ENCODE measurements at regions of chr5 and their contacts with region 1.

Region 1: GRCh38 chr5:137778772-137779564 is 24.8 kb upstream of the HNRNPA0 start:
- DNase-seq: no peak
- H3K4me3 Mint-ChIP-seq: no peak overlapping the region
- H3K27ac Mint-ChIP-seq: no peak overlapping the region
- H3K4me1 Mint-ChIP-seq: no peaks in the 10 kb centered on the region
- H3K27me3 Mint-ChIP-seq: no peaks in the 10 kb centered on the region

Region 2: GRCh38 chr5:137563646-137564397 is 215.1 kb before region 1 on chr5:
- CTCF ChIA-PET with region 1: no interaction called
- intact Hi-C with region 1: no loop called
- DNase-seq: no peak
- H3K4me3 Mint-ChIP-seq: no peak overlapping the region
- H3K27ac Mint-ChIP-seq: no peak overlapping the region
- H3K4me1 Mint-ChIP-seq: no peaks in the 10 kb centered on the region
- H3K27me3 Mint-ChIP-seq: peaks cover 11% of the 10 kb centered on the region

Region 3: GRCh38 chr5:137800700-137801411 is 21.9 kb after region 1 on chr5:
- CTCF ChIA-PET with region 1: interaction called, 17 read pairs
- intact Hi-C with region 1: no loop called
- DNase-seq: no peak
- H3K4me3 Mint-ChIP-seq: no peak overlapping the region
- H3K27ac Mint-ChIP-seq: no peak overlapping the region
- H3K4me1 Mint-ChIP-seq: no peaks in the 10 kb centered on the region
- H3K27me3 Mint-ChIP-seq: no peaks in the 10 kb centered on the region

Region 4: GRCh38 chr5:137808503-137809205 is 29.7 kb after region 1 on chr5:
- CTCF ChIA-PET with region 1: interaction called, 11 read pairs
- intact Hi-C with region 1: no loop called
- DNase-seq: no peak
- H3K4me3 Mint-ChIP-seq: no peak overlapping the region
- H3K27ac Mint-ChIP-seq: no peak overlapping the region
- H3K4me1 Mint-ChIP-seq: no peaks in the 10 kb centered on the region
- H3K27me3 Mint-ChIP-seq: no peaks in the 10 kb centered on the region

Region 5: DNA sequence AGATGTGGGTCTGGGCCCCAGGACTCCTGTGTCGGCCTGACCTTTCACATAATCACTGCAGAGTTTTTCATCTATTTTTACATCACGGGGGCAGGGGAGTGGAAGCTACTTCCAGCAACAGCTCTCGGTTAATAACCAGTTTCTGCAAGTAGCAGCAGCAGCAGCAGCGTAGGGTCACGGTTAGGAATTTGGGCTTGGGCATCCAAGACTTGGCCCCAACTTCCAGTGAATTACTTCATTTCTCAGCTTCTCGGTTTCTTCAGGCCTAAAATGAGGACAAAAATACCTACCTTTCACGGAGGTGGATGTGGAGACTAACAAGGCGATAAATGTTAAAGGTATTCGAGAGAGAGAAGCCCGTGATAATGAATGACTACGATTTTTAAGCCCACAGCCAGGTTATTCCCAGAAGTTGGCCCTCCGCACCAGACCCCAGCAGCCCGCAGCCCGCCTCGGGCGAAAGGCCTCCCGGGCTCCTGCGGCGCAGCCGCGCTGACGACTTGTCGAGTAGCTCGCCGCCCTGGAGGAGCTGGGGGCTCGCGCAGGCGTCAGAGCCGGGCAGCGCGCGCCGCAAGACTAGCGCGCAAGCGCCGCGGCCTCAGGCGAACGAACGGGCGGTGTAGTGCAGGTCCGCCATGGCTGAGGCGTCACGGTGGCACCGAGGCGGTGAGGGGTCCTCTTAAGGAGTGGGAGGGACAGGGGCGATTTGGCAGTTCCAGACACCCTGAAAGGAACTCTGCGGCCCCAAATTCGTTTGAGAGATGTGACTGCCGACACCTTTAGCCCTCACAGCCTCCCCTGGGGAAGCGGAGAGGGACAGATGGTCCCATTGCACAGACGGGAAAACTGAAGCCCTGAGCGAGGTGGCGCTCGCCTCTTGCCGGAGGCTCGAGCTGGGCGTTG is 110.1 kb after region 1 on chr5 and contains the start of gene PKD2L2:
- CTCF ChIA-PET with region 1: interaction called, 16 read pairs
- intact Hi-C with region 1: no loop called
- DNase-seq: peak; percentile 84
- H3K4me3 Mint-ChIP-seq: peak within 1 kb of the TSS; percentile 88
- H3K27ac Mint-ChIP-seq: peak within 1 kb of the TSS; percentile 87
- H3K4me1 Mint-ChIP-seq: peaks cover 21% of the 10 kb centered on the region
- H3K27me3 Mint-ChIP-seq: peaks cover 4% of the 10 kb centered on the region
- total RNA-seq, gene PKD2L2: not detected

Region 6: GRCh38 chr5:138065102-138065501 is 286.1 kb after region 1 on chr5:
- CTCF ChIA-PET with region 1: interaction called, 35 read pairs
- intact Hi-C with region 1: loop called (anchors 1 kb)
- DNase-seq: peak; percentile 14
- H3K4me3 Mint-ChIP-seq: no peak overlapping the region
- H3K27ac Mint-ChIP-seq: no peak overlapping the region
- H3K4me1 Mint-ChIP-seq: peaks cover 4% of the 10 kb centered on the region
- H3K27me3 Mint-ChIP-seq: no peaks in the 10 kb centered on the region

Region 7: GRCh38 chr5:138264183-138264582 is 485.2 kb after region 1 on chr5:
- CTCF ChIA-PET with region 1: no interaction called
- intact Hi-C with region 1: no loop called
- DNase-seq: no peak
- H3K4me3 Mint-ChIP-seq: no peak overlapping the region
- H3K27ac Mint-ChIP-seq: no peak overlapping the region
- H3K4me1 Mint-ChIP-seq: peaks cover 3% of the 10 kb centered on the region
- H3K27me3 Mint-ChIP-seq: peaks cover 9% of the 10 kb centered on the region

Measured in activated naive CD4-positive, alpha-beta T cell treated with anti-CD3 and anti-CD28 coated beads for 36 hours (primary cell).